ENCODE measurements at regions of chr19 and their contacts with region 1.

Region 1: DNA sequence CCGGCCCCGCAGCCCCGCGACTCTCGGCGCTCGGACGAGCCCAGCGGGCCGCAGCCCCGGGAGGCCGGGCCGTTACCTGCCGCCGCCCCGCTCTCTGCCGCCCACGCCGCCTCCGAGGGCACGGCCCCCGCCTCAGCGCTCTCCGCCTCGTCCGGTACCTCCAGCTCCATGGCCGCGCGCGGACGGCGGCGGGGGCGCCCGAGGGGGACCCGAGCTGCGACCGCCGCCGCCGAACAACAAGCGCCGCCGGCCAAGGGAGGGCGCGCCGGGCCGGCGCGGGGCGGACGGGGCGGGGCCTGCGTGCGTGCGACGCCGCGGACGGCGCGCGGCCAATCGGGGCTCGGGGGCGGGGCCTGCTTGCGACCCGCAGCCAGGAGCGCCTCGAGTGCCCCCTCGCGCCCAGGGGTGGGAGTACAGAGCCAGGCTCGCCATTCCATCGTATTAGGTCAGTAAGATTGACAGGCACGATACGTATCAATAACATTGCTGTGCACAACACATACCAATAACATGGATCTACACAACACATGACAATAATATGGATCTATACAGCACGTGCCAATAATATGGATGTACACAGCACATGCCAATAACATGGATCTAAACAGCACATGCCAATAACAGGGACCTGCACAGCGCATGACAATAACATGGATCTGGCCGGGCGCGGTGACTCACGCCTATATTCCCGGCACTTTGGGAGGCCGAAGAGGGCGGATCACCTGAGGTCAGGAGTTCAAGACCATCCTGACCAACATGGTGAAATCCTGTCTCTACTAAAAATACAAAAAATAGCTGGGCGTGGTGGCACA is at the start of gene PIP5K1C:
- DNase-seq: peak; percentile 88 to 89
- H3K4me3 ChIP-seq: peak within 1 kb of the TSS; percentile 65 to 89 (median 70)
- H3K27ac ChIP-seq: peak within 1 kb of the TSS; percentile 76 to 84 (median 78)
- H3K4me1 ChIP-seq: peaks cover 11 to 17% of the 10 kb centered on the region in 2 donors
- H3K27me3 ChIP-seq: no peaks in the 10 kb centered on the region
- CTCF ChIP-seq: peak in 5 of 6 experiments; percentile 54 to 92 (median 90)
- POLR2A ChIP-seq: peak in 1 of 2 donors; percentile 83
- total RNA-seq, gene PIP5K1C: 23.2 to 42.4 (median 35.0) TPM

Region 2: DNA sequence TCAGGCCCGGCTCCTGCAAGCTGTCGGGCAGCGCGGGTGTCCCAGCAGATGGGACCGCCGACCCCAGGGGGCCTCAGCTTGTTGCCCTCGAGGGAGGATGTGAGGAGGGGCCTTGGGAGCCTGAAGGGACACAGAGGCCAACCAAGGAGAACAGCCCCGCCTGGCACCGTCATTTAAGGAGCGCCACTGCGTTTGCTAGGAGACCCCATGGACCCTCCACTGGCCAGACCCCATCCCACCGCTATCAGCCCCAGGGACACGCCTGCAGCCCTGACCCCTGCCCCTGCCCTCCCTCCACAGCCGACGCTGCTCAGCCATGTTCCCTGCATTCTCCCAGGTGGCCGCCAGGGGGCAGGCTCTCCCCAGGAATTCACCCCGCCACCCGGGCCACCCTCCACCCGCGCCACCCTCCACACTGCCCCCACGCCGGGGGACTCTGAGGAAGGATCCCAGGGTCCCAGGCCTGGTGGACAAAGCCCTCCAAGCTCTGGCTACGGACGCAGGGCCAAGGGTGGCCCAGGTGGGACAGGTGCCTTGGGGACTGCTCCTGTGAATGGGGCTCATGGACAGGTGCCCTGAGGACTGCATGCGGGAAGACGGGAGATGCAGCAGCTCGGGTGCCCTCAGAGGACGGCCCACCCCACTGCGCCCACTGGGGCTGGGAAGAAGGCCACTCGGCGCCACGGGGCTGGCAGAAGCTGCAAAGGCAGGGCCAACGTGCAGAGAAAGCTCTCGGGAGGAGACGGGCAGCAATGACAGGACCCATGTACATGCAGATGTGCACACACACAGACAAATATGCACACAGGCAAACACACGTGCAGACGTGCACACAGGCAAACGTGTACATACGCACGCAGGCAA is 34.5 kb before region 1 on chr19:
- intact Hi-C with region 1: loop called (anchors 2 kb)
- DNase-seq: peak; percentile 51 to 57
- H3K4me3 ChIP-seq: no peak overlapping the region
- H3K27ac ChIP-seq: no peak overlapping the region
- H3K4me1 ChIP-seq: peaks cover 0 to 25% of the 10 kb centered on the region in 2 donors
- H3K27me3 ChIP-seq: no peaks in the 10 kb centered on the region
- CTCF ChIP-seq: peak; percentile 85 to 96 (median 88)
- POLR2A ChIP-seq: no peak

Measured in thyroid gland (tissue), 4 donors.